ENCODE measurements at regions of chr11 and their contacts with region 1.

Region 1: DNA sequence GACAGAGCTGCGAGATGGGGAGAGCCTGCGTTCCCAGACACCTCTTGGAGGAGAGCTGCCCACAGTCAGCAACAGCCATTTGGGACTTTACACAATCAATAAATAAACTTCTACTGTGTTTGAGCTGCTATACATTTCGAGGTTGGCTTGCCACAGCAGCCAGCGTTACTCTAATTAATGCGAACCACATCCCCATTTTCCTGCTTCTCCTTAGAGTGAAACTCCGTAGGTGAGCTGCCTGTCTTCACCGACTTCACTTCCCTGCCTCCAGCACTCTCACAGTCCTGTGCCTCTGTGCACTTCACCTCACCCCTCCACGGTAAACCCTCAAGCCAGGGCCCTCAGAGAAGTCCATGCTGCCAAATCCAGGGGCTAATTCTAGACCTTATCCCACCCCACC is 5.9 kb upstream of the SLC22A12 start:
- DNase-seq: no peak
- H3K4me3 ChIP-seq: no peak overlapping the region
- H3K27ac ChIP-seq: no peak overlapping the region
- H3K4me1 ChIP-seq: no peaks in the 10 kb centered on the region
- H3K27me3 ChIP-seq: no peaks in the 10 kb centered on the region
- CTCF ChIP-seq: no peak

Region 2: DNA sequence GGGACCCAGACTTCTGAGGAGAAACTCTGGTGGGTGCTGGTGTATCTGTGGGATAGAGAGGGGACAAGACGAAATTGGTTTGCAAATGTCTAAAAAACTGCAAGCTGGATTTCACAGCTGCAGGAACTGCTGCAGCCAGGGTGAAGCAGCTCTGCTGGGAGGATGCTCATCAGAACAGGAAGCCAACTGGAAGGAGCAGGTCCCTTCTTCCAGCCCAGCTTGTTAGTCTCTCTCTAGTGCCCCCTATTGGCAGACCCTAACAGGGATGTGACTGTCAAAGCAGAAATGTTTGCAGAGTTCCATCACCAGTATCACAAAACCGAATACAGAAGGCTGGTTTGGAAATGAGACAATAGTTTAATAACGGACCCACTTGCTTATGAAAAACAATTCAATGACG is 68.9 kb before region 1 on chr11:
- CTCF ChIA-PET with region 1: no interaction called
- dilution Hi-C with region 1: loop called (anchors 5 kb)
- in situ Hi-C with region 1: no loop called
- intact Hi-C with region 1: no loop called
- DNase-seq: no peak
- H3K4me3 ChIP-seq: no peak overlapping the region
- H3K27ac ChIP-seq: no peak overlapping the region
- H3K4me1 ChIP-seq: peaks cover 5% of the 10 kb centered on the region
- H3K27me3 ChIP-seq: no peaks in the 10 kb centered on the region
- CTCF ChIP-seq: no peak

Region 3: DNA sequence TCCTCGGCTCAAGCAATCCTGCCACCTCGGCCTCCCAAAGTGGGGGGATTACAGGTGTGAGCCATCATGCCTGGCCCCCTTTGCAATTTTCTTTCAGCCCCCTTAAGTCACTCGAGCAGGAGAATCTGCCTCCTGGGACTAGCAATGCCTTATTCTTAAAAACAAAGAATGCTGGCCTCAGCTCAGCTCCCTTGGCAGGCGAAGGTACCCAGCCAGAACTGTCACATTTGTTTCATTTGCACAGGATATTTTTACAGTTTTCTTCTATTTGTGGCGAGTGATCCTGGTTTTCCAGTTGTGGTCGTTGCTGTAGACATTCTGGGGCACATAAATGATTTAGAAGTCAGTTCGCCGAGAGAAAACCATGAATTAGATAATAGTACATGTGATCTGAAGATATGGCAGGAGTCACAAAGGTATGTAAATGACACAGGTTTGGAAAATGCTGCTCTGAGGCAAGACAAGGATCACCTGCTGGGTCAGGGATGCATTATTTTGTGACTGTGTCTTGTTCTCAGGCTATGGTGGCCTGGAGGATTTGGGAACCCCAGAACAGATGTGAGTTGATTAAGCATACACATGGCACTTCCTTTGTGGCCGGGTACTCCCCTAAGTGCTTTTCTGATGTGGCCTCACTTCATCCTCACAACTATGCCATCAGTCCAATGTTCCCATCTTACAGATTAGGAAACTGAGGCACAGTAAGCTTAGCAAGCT is 45.3 kb before region 1 on chr11:
- CTCF ChIA-PET with region 1: no interaction called
- dilution Hi-C with region 1: loop called (anchors 5 kb)
- in situ Hi-C with region 1: no loop called
- intact Hi-C with region 1: no loop called
- DNase-seq: no peak
- H3K4me3 ChIP-seq: no peak overlapping the region
- H3K27ac ChIP-seq: no peak overlapping the region
- H3K4me1 ChIP-seq: peaks cover 33% of the 10 kb centered on the region
- H3K27me3 ChIP-seq: no peaks in the 10 kb centered on the region
- CTCF ChIP-seq: no peak

Region 4: DNA sequence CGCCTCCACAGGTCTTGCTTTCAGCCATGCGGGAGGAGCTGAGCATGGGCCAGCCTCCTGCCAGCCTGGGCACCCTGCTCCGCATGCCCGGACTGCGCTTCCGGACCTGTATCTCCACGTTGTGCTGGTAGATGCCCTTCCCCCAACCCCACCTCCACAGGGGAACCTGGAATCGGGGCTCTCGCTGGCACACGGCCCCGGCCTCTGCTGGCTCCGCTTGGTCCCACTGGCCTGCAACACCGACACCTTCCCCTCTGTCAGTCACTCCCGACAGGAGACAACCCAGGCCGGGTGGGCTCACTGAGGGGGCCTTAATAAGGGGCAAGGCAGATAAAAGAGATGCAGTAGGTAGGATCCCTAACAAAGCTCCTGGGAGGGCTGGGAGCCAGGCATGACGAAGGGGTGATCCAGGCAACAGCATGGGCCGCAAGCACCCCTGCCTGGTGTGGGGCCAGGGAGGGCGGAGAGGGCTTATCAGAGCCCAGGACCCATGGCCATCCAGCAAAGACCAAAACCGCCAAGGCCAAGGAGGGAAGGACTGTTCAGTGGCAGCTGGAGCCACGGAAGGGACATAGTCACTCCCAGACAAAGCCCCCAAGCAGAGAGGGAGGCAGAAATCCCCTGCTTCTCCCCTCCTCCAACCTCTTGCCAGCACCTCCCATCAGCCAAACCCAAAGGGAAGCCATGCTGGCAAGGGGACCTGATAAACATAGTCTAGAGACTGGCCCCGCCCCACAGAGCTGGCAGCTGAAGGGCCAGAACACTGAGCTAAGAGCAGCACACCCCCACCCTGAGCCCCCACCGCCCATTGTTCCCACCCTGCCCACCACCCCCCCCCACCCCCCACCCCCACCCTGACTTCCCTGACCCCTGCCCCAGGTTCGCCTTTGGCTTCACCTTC is 13.9 kb after region 1 on chr11:
- CTCF ChIA-PET with region 1: no interaction called
- dilution Hi-C with region 1: no loop called
- in situ Hi-C with region 1: no loop called
- intact Hi-C with region 1: no loop called
- DNase-seq: no peak
- H3K4me3 ChIP-seq: no peak overlapping the region
- H3K27ac ChIP-seq: no peak overlapping the region
- H3K4me1 ChIP-seq: no peaks in the 10 kb centered on the region
- H3K27me3 ChIP-seq: no peaks in the 10 kb centered on the region
- CTCF ChIP-seq: no peak

Region 5: DNA sequence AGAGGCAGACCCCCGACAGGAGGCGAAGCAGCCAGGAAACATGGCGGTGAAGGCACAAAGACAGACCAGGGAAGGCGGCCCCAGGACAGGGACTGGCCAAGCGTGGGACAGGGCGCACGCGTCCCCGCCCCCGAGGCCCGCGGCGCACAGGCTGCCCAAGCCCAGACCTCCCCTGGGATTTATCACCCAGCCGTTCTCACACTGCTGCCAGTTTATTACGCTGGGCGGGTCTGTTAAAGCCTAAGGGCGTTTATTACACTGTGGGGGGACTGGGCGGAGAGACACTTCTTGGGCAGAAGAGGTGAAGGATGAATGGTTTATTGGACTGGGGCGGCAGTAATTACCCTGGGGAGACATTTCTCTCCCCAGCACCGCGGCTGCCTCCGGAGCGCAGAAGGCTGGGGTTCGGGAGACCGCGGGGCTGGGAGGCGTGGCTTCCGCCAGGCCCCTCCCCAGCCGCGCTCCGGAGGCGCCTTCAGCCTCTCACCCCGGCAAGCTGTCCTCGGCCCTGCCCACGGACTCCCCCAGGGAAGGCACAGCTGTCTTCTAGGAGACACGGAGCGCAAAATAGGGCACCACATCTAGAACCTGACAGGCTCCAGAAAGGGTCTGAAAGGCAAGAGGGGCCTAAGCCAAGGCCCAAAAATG is 53.0 kb after region 1 on chr11:
- CTCF ChIA-PET with region 1: no interaction called
- dilution Hi-C with region 1: loop called (anchors 5 kb)
- in situ Hi-C with region 1: no loop called
- intact Hi-C with region 1: no loop called
- DNase-seq: no peak
- H3K4me3 ChIP-seq: no peak overlapping the region
- H3K27ac ChIP-seq: no peak overlapping the region
- H3K4me1 ChIP-seq: no peaks in the 10 kb centered on the region
- H3K27me3 ChIP-seq: peaks cover 29% of the 10 kb centered on the region
- CTCF ChIP-seq: no peak

Measured in mammary epithelial cell (primary cell).